Activated CD8-positive, alpha-beta T cell treated with anti-CD3 and anti-CD28 coated beads for 36 hours (primary cell): ENCODE measurements at regions of chr5 and their contacts with region 1.

Region 1: GRCh38 chr5:176361437-176362232 is at the start of gene KIAA1191:
- DNase-seq: peak; percentile 96
- ATAC-seq: peak; percentile 90
- H3K4me3 Mint-ChIP-seq: peak within 1 kb of the TSS; percentile 98
- H3K27ac Mint-ChIP-seq: peak within 1 kb of the TSS; percentile 98
- H3K4me1 Mint-ChIP-seq: peaks cover 29% of the 10 kb centered on the region
- H3K27me3 Mint-ChIP-seq: no peaks in the 10 kb centered on the region
- CTCF ChIP-seq: peak; percentile 14
- total RNA-seq, gene KIAA1191: 39.4 to 40.8 TPM

Region 2: GRCh38 chr5:176379881-176380280 is 18.2 kb after region 1 on chr5:
- CTCF ChIA-PET with region 1: no interaction called
- POLR2A ChIA-PET with region 1: interaction called, 14 read pairs
- intact Hi-C with region 1: no loop called
- DNase-seq: no peak
- ATAC-seq: no peak
- H3K4me3 Mint-ChIP-seq: no peak overlapping the region
- H3K27ac Mint-ChIP-seq: no peak overlapping the region
- H3K4me1 Mint-ChIP-seq: peaks cover 2% of the 10 kb centered on the region
- H3K27me3 Mint-ChIP-seq: no peaks in the 10 kb centered on the region
- CTCF ChIP-seq: no peak

Region 3: DNA sequence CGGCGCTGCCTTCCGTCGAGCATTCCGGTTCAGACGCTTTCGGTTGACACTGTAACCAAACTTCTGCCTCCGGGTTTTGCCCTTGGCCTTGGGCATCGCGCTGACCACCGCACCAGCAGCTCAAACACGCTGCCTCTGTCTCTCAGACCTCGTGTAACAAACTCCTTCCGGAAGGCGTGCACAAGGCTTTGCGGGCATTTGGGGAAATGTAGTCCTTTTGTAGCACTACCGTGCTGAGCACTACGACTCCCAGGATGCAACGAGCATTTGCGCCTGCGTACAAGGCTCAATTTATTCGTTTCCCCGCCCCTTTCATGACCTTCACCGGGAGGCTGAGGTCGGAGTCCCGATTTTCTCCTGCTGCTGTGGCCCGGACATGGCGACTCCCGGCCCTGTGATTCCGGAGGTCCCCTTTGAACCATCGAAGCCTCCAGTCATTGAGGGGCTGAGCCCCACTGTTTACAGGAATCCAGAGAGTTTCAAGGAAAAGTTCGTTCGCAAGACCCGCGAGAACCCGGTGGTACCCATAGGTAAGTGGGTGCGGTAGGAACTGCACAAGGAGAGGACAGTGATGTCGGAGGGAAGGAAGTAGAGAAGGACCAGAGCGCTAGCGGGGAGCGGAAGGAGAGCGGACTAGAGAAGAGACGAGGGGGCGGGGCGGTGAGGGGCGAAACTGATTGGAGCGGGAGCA is 27.0 kb after region 1 on chr5 and contains the starts of genes HIGD2A and NOP16:
- CTCF ChIA-PET with region 1: no interaction called
- POLR2A ChIA-PET with region 1: interaction called, 10 read pairs
- intact Hi-C with region 1: loop called (anchors 1 kb)
- DNase-seq: peak; percentile 100
- ATAC-seq: peak; percentile 92
- H3K4me3 Mint-ChIP-seq: peak within 1 kb of the TSS; percentile 98
- H3K27ac Mint-ChIP-seq: peak within 1 kb of the TSS; percentile 99
- H3K4me1 Mint-ChIP-seq: peaks cover 29% of the 10 kb centered on the region
- H3K27me3 Mint-ChIP-seq: no peaks in the 10 kb centered on the region
- CTCF ChIP-seq: no peak
- total RNA-seq, gene HIGD2A: 118 to 120 TPM
- total RNA-seq, gene NOP16: 71.8 to 75.1 TPM